Upper lobe of right lung (tissue), 1 donor: ENCODE measurements at regions of chr5 and their contacts with region 1.

Region 1: DNA sequence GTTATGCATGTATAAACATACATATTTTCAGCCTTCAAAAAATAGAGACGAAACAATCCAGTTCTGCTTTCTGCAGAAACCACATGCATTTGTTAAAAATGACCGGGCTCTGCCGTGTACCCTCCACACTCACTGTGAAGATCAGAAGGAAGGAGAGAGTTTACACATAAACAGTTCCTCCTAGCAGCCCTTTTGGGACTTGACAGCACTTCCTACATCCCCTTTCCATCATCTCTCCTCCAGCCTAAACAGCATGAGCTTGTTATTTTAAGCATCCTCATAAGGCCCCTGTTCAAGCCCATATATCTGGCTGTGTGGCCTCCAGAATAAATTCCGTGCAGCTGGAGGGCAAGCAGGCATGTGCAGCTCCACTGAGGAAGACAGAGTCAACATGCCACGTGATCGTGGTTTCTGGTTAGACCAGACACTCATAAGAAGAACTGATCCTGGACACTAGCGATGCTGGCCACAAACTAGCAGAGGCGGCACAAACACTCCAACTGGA is 42.2 kb downstream of the NIPAL4 start:
- DNase-seq: no peak
- ATAC-seq: peak; percentile 62
- H3K4me3 ChIP-seq: no peak overlapping the region
- H3K27ac ChIP-seq: no peak overlapping the region
- H3K4me1 ChIP-seq: peaks cover 6% of the 10 kb centered on the region
- H3K27me3 ChIP-seq: no peaks in the 10 kb centered on the region
- CTCF ChIP-seq: no peak

Region 2: DNA sequence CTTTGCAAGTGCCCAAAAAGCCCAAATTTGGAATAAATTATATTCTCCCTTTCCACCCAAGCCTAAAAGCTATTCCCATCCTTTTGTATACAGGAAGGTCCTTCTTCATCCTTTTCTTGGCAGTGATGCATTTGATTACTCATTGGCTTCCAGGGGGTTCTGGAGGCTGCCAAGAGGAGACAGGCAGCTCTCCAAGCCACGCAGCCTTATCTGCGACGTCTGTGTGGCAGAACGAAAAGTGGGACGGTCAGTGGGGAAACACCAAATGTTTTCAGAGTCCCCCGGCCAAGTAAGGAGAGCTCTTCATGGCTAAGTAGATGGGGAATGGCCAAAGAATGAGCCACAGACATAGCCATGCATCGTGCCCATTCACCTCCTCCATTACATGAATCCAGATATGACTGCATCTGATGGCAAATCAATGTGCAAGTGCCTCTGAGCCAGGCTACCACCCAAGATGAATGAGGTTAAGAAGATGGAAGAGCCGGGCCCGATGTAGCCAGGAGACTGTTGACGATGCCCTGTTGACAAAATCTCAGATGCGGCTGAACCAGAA is 61.3 kb after region 1 on chr5:
- intact Hi-C with region 1: loop called (anchors 10 kb)
- DNase-seq: no peak
- ATAC-seq: no peak
- H3K4me3 ChIP-seq: no peak overlapping the region
- H3K27ac ChIP-seq: peak overlapping the region; percentile 8
- H3K4me1 ChIP-seq: peaks cover 34% of the 10 kb centered on the region
- H3K27me3 ChIP-seq: no peaks in the 10 kb centered on the region
- CTCF ChIP-seq: no peak